ENCODE measurements at regions of chr10 and their contacts with region 1.

Region 1: GRCh38 chr10:13769955-13770354 is 183.2 kb downstream of the PRPF18 start:
- DNase-seq: no peak
- ATAC-seq: peak; percentile 78
- H3K4me3 ChIP-seq: no peak overlapping the region
- H3K27ac ChIP-seq: no peak overlapping the region
- H3K4me1 ChIP-seq: peaks cover 11% of the 10 kb centered on the region
- H3K27me3 ChIP-seq: no peaks in the 10 kb centered on the region
- CTCF ChIP-seq: no peak
- EP300 ChIP-seq: peak; percentile 14 to 25; a peak in 2 of 4 replicates
- POLR2A ChIP-seq: no peak
- RAD21 ChIP-seq: no peak

Region 2: GRCh38 chr10:13751191-13751764 is 18.7 kb before region 1 on chr10:
- CTCF ChIA-PET with region 1: interaction called, 30 read pairs
- POLR2A ChIA-PET with region 1: interaction called, 104 read pairs
- RAD21 ChIA-PET with region 1: interaction called, 382 read pairs
- SMC1A ChIA-PET with region 1: interaction called, 399 read pairs
- in situ Hi-C with region 1: no loop called
- intact Hi-C with region 1: no loop called
- DNase-seq: peak; percentile 60
- ATAC-seq: peak; percentile 69
- H3K4me3 ChIP-seq: no peak overlapping the region
- H3K27ac ChIP-seq: peak overlapping the region; percentile 78
- H3K4me1 ChIP-seq: peaks cover 73% of the 10 kb centered on the region
- H3K27me3 ChIP-seq: no peaks in the 10 kb centered on the region
- CTCF ChIP-seq: no peak
- EP300 ChIP-seq: peak in 1 of 2 experiments; percentile 64; a peak in 2 of 4 replicates
- POLR2A ChIP-seq: no peak
- RAD21 ChIP-seq: no peak

Region 3: GRCh38 chr10:13801907-13802288 is 31.9 kb after region 1 on chr10:
- CTCF ChIA-PET with region 1: no interaction called
- POLR2A ChIA-PET with region 1: no interaction called
- RAD21 ChIA-PET with region 1: no interaction called
- SMC1A ChIA-PET with region 1: no interaction called
- in situ Hi-C with region 1: no loop called
- intact Hi-C with region 1: no loop called
- DNase-seq: no peak
- ATAC-seq: no peak
- H3K4me3 ChIP-seq: no peak overlapping the region
- H3K27ac ChIP-seq: no peak overlapping the region
- H3K4me1 ChIP-seq: no peaks in the 10 kb centered on the region
- H3K27me3 ChIP-seq: no peaks in the 10 kb centered on the region
- CTCF ChIP-seq: no peak
- EP300 ChIP-seq: no peak
- POLR2A ChIP-seq: no peak
- RAD21 ChIP-seq: no peak